ENCODE measurements at regions of chr7 and their contacts with region 1.

Region 1: GRCh38 chr7:105388373-105389087 is at the start of gene SRPK2:
- DNase-seq: no peak
- H3K4me3 ChIP-seq: peak within 1 kb of the TSS; percentile 89
- H3K27me3 ChIP-seq: no peaks in the 10 kb centered on the region
- CTCF ChIP-seq: no peak
- polyA plus RNA-seq, gene SRPK2: 10.8 and 18.1 TPM in 2 replicates

Region 2: DNA sequence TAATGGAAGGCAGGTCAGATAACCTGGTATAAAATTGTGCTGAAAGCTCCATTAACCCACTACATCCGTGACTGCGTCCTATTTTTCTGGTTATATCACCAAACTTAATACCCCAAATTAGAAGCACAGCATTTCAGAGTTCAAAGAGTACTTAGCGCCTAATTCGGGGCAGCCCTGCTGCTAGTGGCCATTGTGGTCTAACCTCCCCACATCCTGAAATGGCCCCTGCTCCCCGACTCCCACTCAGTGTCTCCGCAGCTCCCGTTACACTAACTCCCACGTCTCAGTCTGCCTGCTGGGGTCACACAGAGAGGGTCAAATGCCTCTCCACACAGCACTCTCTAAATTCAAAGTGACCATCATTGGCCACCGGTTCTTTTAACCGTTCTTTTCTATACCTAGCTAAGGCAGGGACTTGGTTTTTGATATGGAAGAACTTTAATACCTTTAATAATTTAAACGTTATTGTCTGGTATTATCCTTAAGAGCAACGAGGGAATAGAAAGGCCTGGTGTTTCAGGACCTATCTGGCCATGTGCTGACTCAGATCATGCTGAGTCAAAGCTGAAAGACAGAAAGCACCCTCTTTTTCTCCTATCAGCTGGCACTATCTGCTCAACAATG is 257.4 kb before region 1 on chr7:
- CTCF ChIA-PET with region 1: no interaction called
- POLR2A ChIA-PET with region 1: interaction called, 13 read pairs
- DNase-seq: no peak
- H3K4me3 ChIP-seq: no peak overlapping the region
- H3K27me3 ChIP-seq: no peaks in the 10 kb centered on the region
- CTCF ChIP-seq: no peak

Region 3: GRCh38 chr7:105638902-105639495 is 250.5 kb after region 1 on chr7:
- CTCF ChIA-PET with region 1: no interaction called
- POLR2A ChIA-PET with region 1: no interaction called
- DNase-seq: no peak
- H3K4me3 ChIP-seq: no peak overlapping the region
- H3K27me3 ChIP-seq: no peaks in the 10 kb centered on the region
- CTCF ChIP-seq: no peak